GM13977 (cell line): ENCODE measurements at regions of chr4 and their contacts with region 1.

Region 1: DNA sequence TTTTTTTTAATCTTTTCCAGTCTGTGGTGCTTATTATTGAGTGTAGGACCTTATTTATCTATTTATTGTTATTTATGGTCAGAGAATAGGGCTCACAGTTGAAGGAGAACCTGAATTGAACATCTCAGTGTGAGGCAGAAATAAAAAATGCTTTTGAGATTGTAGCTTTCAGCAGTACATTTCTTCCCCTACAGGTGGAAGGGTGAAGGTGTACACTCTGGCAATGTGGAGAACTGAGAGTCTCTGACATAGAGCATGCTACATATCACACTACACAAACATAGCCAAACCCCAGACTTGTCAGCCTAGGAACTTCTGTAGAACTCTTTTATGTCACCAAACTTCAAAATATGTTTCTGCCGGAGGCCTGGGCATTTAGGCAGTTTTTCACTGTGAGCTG is 140.2 kb downstream of the STIM2 start:
- DNase-seq: no peak
- CTCF ChIP-seq: peak; percentile 51

Region 2: GRCh38 chr4:26885912-26886274 is 114.9 kb before region 1 on chr4:
- in situ Hi-C with region 1: loop called (anchors 10 kb)
- DNase-seq: peak; percentile 65
- CTCF ChIP-seq: no peak